ENCODE measurements at regions of chr3 and their contacts with region 1.

Region 1: GRCh38 chr3:52278510-52279069 is at the start of gene WDR82:
- DNase-seq: peak; percentile 95
- ATAC-seq: peak; percentile 86
- H3K4me3 ChIP-seq: peak within 1 kb of the TSS; percentile 67 to 94 (median 77)
- H3K4me3 Mint-ChIP-seq: peak within 1 kb of the TSS; percentile 95
- H3K27ac ChIP-seq: peak within 1 kb of the TSS; percentile 83 to 87
- H3K27ac Mint-ChIP-seq: peak within 1 kb of the TSS; percentile 100
- H3K4me1 ChIP-seq: peaks cover 35 to 51% of the 10 kb centered on the region in 2 donors
- H3K4me1 Mint-ChIP-seq: peaks cover 47% of the 10 kb centered on the region
- H3K27me3 ChIP-seq: no peaks in the 10 kb centered on the region
- H3K27me3 Mint-ChIP-seq: no peaks in the 10 kb centered on the region
- CTCF ChIP-seq: peak; percentile 24
- total RNA-seq, gene WDR82: 94.0 and 101 TPM in 2 replicates

Region 2: DNA sequence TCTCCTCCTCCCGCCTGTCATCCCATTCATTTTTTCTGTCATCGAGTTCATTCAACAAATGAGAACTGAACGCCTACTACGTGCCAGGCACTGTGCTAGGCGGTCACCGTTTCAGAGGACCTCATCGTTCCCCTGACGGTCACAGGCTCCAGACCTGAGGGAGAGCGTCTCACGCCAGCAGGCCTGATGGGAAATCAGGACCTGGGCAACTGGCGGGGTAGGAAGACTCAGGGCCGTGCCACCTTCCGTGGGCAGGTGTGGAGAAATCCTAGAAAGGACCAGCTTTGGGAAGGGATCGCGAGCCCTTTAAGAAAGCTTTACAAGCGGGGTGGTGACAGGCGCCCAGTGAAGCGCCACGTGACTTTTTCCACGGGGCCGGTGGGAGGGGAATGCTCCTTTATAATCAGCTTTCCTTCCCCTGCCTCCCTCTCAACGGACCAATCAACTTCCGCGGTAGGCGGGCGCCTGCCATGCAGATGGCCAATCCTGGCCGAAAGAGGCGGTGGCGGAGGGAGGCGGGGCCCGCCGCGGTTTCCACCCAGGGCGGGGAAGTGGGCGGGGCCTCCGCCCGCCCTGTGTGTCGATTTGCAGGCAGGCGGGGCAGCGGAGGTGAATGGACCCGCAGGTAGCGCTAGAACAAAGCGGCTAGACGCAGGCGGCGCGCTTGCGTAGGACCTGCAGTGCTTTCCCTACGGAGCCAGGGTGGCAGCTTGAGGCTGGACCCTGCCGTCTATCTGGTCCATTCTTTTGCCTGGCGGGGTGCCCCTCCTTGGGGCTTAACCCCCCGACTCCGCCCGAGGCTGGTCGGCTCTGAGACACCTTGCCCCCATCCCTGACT is 221.4 kb before region 1 on chr3:
- CTCF ChIA-PET with region 1: no interaction called
- POLR2A ChIA-PET with region 1: interaction called, 3 read pairs
- intact Hi-C with region 1: loop called (anchors 2 kb)
- DNase-seq: peak; percentile 99
- ATAC-seq: peak; percentile 85
- H3K4me3 ChIP-seq: peak overlapping the region; percentile 38 to 88 (median 78)
- H3K4me3 Mint-ChIP-seq: peak overlapping the region; percentile 95
- H3K27ac ChIP-seq: peak overlapping the region; percentile 79 to 83
- H3K27ac Mint-ChIP-seq: peak overlapping the region; percentile 94
- H3K4me1 ChIP-seq: peaks cover 43 to 57% of the 10 kb centered on the region in 2 donors
- H3K4me1 Mint-ChIP-seq: peaks cover 53% of the 10 kb centered on the region
- H3K27me3 ChIP-seq: no peaks in the 10 kb centered on the region
- H3K27me3 Mint-ChIP-seq: no peaks in the 10 kb centered on the region
- CTCF ChIP-seq: no peak

Region 3: GRCh38 chr3:52225452-52226228 is 53.0 kb before region 1 on chr3 and contains the start of gene TLR9:
- CTCF ChIA-PET with region 1: interaction called, 265 read pairs
- POLR2A ChIA-PET with region 1: interaction called, 38 read pairs
- intact Hi-C with region 1: loop called (anchors 1 kb)
- DNase-seq: peak; percentile 94
- ATAC-seq: peak; percentile 89
- H3K4me3 ChIP-seq: peak within 1 kb of the TSS; percentile 39 to 90 (median 66)
- H3K4me3 Mint-ChIP-seq: peak within 1 kb of the TSS; percentile 94
- H3K27ac ChIP-seq: peak within 1 kb of the TSS; percentile 78 to 88
- H3K27ac Mint-ChIP-seq: peak within 1 kb of the TSS; percentile 99
- H3K4me1 ChIP-seq: peaks cover 46 to 69% of the 10 kb centered on the region in 2 donors
- H3K4me1 Mint-ChIP-seq: peaks cover 69% of the 10 kb centered on the region
- H3K27me3 ChIP-seq: no peaks in the 10 kb centered on the region
- H3K27me3 Mint-ChIP-seq: no peaks in the 10 kb centered on the region
- CTCF ChIP-seq: no peak
- total RNA-seq, gene TLR9: 16.0 and 21.0 TPM in 2 replicates

Region 4: DNA sequence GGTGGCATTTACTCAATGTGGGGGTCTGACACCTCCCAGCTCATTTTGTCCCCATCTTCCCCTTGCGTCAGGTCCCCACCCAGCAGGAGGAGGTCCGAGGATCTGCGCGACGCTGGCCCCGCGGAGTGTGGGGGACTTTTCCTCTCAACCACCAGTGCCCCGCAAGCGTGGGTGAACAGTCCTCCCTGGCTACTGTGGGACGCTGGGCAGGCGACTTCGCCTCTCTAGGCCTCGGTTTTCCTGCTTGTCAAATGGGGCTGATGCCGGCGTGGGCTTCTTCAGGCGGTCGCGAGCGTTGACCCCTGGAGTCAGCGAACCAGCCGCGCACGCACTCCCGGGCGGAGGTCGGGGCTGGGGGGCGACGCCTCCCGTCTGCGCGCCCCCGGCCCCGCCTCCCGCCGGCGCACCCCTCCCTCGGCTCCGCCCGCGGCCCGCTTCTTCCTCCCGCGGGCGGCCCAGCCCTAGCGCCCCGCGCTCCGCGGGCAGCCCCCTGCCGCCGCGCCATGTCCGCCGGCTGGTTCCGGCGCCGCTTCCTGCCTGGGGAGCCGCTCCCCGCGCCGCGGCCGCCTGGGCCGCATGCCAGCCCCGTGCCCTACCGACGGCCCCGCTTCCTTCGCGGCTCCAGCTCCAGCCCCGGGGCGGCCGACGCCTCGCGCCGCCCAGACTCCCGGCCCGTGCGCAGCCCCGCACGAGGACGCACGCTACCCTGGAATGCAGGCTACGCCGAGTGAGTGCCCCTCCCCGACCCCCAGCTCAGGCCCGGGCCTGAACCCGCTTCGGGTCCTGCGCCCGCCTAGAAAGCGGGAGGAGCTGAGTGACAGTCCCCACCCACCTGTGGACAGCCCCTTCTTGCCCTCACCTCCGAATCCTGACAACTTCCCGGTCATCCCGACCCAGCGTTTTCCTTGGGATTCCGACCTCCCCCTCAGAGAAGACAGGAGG is 33.0 kb before region 1 on chr3 and contains the start of gene PPM1M:
- CTCF ChIA-PET with region 1: interaction called, 11 read pairs
- POLR2A ChIA-PET with region 1: interaction called, 5 read pairs
- intact Hi-C with region 1: loop called (anchors 1 kb)
- DNase-seq: peak; percentile 71
- ATAC-seq: peak; percentile 64
- H3K4me3 ChIP-seq: peak within 1 kb of the TSS; percentile 36 to 85 (median 76)
- H3K4me3 Mint-ChIP-seq: peak within 1 kb of the TSS; percentile 87
- H3K27ac ChIP-seq: peak within 1 kb of the TSS; percentile 71 to 83
- H3K27ac Mint-ChIP-seq: peak within 1 kb of the TSS; percentile 96
- H3K4me1 ChIP-seq: peaks cover 36 to 42% of the 10 kb centered on the region in 2 donors
- H3K4me1 Mint-ChIP-seq: peaks cover 55% of the 10 kb centered on the region
- H3K27me3 ChIP-seq: no peaks in the 10 kb centered on the region
- H3K27me3 Mint-ChIP-seq: no peaks in the 10 kb centered on the region
- CTCF ChIP-seq: no peak
- total RNA-seq, gene PPM1M: 45.0 and 53.6 TPM in 2 replicates

Region 5: GRCh38 chr3:52313774-52314188 is 35.2 kb after region 1 on chr3:
- CTCF ChIA-PET with region 1: no interaction called
- POLR2A ChIA-PET with region 1: interaction called, 7 read pairs
- intact Hi-C with region 1: loop called (anchors 5 kb)
- DNase-seq: peak; percentile 79
- ATAC-seq: peak; percentile 68
- H3K4me3 ChIP-seq: no peak overlapping the region
- H3K4me3 Mint-ChIP-seq: peak overlapping the region; percentile 76
- H3K27ac ChIP-seq: peak overlapping the region; percentile 65 to 82
- H3K27ac Mint-ChIP-seq: peak overlapping the region; percentile 94
- H3K4me1 ChIP-seq: peaks cover 36 to 61% of the 10 kb centered on the region in 2 donors
- H3K4me1 Mint-ChIP-seq: peaks cover 66% of the 10 kb centered on the region
- H3K27me3 ChIP-seq: no peaks in the 10 kb centered on the region
- H3K27me3 Mint-ChIP-seq: no peaks in the 10 kb centered on the region
- CTCF ChIP-seq: no peak

Region 6: DNA sequence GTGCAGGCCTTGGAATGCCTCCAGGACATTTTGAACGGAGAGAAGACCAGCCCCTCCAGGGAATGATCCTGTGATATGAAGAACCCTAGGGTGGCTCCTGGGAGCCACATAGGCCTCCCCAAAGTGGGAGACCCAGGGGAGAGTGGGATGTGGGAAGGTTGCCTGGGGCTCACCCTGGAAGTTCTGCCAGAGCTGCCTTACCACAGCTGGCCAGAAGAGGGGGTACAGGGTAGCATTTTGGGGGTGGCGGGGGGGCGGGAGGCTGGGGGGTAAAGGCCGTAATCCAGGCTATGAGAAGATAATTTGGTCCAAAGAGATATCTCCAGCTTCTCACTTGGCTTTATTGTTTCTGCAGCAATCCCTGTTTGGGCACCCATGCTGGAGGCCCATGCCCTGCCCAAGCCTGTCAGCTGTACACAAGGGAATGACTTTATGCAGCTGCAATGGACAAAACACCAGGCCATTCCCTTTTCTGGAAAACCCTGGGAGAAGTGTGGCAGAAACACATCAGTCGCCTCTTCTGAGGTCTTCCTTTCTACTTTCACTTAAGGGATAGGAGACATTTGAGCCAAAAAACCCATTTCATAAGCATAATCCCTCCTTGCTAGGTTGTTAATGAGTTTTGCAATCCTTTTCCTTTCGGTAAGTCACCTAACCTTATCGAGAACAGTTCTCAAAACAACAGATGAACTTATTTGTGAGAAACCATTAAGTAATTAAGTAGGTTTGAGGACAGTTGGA is 567.3 kb after region 1 on chr3:
- CTCF ChIA-PET with region 1: no interaction called
- POLR2A ChIA-PET with region 1: no interaction called
- intact Hi-C with region 1: no loop called
- DNase-seq: peak; percentile 36
- ATAC-seq: peak; percentile 33
- H3K4me3 ChIP-seq: no peak overlapping the region
- H3K4me3 Mint-ChIP-seq: no peak overlapping the region
- H3K27ac ChIP-seq: no peak overlapping the region
- H3K27ac Mint-ChIP-seq: no peak overlapping the region
- H3K4me1 ChIP-seq: no peaks in the 10 kb centered on the region
- H3K4me1 Mint-ChIP-seq: no peaks in the 10 kb centered on the region
- H3K27me3 ChIP-seq: no peaks in the 10 kb centered on the region
- H3K27me3 Mint-ChIP-seq: no peaks in the 10 kb centered on the region
- CTCF ChIP-seq: peak; percentile 69

Measured in B cell (primary cell).